ENCODE measurements at regions of chr22 and their contacts with region 1.

Region 1: GRCh38 chr22:19730655-19731360 is 7.5 kb downstream of the GP1BB start:
- DNase-seq: peak; percentile 3
- H3K4me3 ChIP-seq: peak overlapping the region; percentile 52
- H3K27me3 ChIP-seq: no peaks in the 10 kb centered on the region
- CTCF ChIP-seq: peak; percentile 96

Region 2: DNA sequence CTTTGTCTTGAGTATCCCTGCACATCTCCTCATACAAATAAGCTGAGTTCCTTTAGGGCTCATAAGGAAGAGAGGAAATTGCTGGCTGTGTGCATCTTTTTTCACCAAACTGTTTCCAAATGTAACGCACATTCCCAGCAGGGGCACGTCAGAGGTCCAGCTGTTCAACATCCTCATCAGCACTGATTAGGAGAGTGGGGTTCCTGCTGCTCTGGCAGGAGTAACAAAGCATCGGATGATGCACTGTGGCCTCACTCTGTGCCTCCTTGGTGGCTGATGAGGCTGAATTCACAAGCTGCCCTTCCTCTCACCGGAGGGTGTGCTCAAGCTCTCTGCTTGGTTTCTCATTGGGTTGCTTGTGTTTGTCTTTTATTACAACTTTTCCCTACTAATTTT is 516.7 kb before region 1 on chr22:
- CTCF ChIA-PET with region 1: no interaction called
- POLR2A ChIA-PET with region 1: no interaction called
- DNase-seq: no peak
- H3K4me3 ChIP-seq: no peak overlapping the region
- H3K27me3 ChIP-seq: no peaks in the 10 kb centered on the region
- CTCF ChIP-seq: no peak

Region 3: DNA sequence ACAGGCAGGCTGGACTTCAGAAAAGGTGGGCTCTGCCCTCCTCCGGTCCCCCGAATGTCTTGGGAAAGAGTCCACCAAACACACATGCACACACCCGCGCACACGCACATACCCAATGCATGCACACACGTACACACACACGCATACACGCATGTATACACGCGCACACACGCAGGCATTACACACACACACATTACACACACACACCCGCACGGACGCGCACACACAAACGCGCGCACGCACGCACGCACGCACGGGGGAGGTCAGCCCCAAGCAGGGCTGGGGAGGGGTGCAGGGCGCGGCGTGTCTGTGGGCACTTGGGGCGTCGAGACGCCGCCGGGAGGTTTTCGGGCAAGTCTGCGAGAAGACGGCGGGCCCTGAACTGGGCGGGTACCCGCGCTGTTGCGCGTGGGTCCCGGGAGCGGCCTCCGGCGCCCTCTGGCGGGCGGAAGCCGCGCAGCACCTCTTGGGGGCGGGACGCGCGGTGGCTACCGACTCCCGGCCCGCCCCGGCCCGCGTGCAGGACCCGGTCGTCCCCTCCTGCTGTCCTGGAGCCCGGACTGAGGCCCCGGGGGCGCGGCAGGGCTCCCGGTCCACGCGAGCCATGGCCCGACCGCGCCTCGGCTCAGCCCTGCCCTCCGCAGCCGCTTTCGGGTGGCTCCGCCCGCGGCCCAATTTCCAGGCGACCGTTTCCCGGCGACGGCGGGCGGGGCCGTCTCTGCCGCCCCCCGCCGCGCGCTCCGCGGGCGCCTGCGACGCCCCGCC is 12.9 kb before region 1 on chr22:
- CTCF ChIA-PET with region 1: interaction called, 18 read pairs
- POLR2A ChIA-PET with region 1: no interaction called
- DNase-seq: peak; percentile 10
- H3K4me3 ChIP-seq: peak overlapping the region; percentile 84
- H3K27me3 ChIP-seq: peaks cover 3% of the 10 kb centered on the region; the same call in 1 of the 2 replicates
- CTCF ChIP-seq: peak; percentile 68

Region 4: GRCh38 chr22:19772422-19773324 is 41.9 kb after region 1 on chr22:
- CTCF ChIA-PET with region 1: interaction called, 12 read pairs
- POLR2A ChIA-PET with region 1: no interaction called
- DNase-seq: no peak
- H3K4me3 ChIP-seq: no peak overlapping the region
- H3K27me3 ChIP-seq: peaks cover 22% of the 10 kb centered on the region
- CTCF ChIP-seq: no peak

Region 5: GRCh38 chr22:19854778-19855503 is 124.1 kb after region 1 on chr22 and contains the starts of genes GNB1L and RTL10:
- CTCF ChIA-PET with region 1: interaction called, 14 read pairs
- POLR2A ChIA-PET with region 1: no interaction called
- DNase-seq: peak; percentile 80
- H3K4me3 ChIP-seq: peak within 1 kb of the TSS; percentile 81
- H3K27me3 ChIP-seq: no peaks in the 10 kb centered on the region
- CTCF ChIP-seq: peak; percentile 15; the same call in 1 of the 2 replicates
- polyA plus RNA-seq, gene GNB1L: 1.3 and 3.6 TPM in 2 replicates
- polyA plus RNA-seq, gene RTL10: 11.7 and 18.9 TPM in 2 replicates

Region 6: DNA sequence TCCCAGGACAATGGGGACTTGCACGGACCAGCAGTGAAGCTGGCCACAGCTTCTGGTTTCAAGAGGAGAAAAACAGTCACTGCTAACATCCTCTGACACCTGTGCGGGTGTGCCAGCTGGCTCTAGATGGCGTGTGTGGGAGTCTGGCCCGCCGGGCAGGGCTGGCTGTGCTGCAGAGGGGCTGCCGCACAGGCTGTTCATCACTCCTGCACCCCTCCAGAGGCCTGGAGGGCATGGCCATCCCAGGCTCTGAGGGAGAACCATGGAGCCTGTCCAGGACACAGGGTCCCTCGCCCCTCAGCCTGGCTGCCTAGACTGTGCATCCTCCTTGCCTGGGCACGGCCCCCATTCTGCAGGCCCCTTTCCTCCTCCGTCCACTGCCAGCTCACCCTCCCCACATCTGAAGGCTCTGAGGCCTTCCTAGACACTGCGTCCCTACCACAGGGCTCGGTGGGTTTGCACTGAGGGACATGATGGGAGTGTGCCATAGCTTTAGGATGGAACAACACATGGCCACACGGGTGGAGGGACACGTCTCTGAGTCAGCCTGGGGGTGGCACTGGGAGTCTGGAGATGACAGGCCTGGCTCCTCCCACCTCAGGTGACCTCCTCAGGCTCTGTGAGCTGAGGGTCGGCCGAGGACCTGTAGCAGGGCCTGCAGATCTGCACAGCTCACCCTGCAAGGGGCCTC is 166.0 kb after region 1 on chr22:
- CTCF ChIA-PET with region 1: interaction called, 76 read pairs
- POLR2A ChIA-PET with region 1: no interaction called
- DNase-seq: no peak
- H3K4me3 ChIP-seq: no peak overlapping the region
- H3K27me3 ChIP-seq: no peaks in the 10 kb centered on the region
- CTCF ChIP-seq: no peak

Region 7: DNA sequence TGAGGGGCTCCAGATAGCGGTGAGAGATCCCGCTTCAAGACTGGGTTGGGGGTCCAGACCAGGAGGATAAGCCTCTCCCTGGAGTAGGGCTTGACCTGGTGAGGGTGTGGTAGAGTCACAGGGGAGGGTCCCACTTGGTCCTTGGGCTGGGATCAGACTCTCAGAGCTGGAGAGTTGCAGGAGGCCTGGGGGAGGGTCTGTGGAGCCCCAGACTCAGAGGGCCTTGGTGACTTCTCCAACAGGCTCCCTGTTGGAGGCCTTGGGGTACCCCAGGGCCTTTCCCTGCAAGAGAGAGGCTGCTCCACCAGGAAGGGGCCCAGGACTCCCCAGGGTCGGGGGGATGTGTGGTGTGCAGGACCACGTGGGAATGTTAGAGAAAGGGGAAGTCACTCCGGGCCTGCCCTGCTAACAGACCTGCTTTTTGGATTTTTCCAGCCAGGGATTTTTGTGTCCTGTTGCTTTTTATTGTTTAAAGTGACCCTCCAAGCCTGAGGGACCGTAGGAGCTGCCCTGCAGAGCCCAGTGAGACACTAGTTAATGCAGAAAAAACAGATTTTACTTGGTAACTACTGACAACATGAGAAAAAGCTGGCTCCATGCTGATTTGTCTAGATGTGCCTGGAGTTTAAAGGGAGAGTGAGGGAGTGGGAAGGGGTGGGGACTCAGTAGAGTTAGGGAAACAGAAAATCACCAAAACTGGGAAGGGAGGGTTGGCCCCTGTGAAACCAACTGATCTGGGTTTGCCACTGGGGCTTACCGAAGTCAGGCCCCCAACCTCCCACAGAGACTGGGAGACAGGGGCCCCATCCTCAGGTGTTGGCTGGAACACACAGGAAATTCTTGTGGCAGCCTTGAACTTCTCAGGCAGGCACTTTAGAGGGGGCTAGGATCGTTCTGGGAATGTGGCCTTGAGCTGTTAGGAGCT is 211.6 kb after region 1 on chr22:
- CTCF ChIA-PET with region 1: interaction called, 13 read pairs
- POLR2A ChIA-PET with region 1: no interaction called
- DNase-seq: no peak
- H3K4me3 ChIP-seq: peak overlapping the region; percentile 52
- H3K27me3 ChIP-seq: no peaks in the 10 kb centered on the region
- CTCF ChIP-seq: no peak